Activated T-helper 2 cell treated with anti-CD3 and anti-CD28 coated beads, Interferon-gamma antibody, Interleukin-2, Interleukin-4, amounts not matched to agents 10 μg/mL and 5 μg/mL and 100 μg/mL, durations not matched to agents 14 hours and 24 hours and 36 hours (primary cell): ENCODE measurements at regions of chr1 and their contacts with region 1.

Region 1: GRCh38 chr1:185559684-185560331 is 174.4 kb upstream of the HMCN1 start:
- DNase-seq: peak; percentile 75
- H3K4me3 Mint-ChIP-seq: peak overlapping the region; percentile 5
- H3K27ac Mint-ChIP-seq: peak overlapping the region; percentile 71
- H3K4me1 Mint-ChIP-seq: peaks cover 51% of the 10 kb centered on the region
- H3K27me3 Mint-ChIP-seq: no peaks in the 10 kb centered on the region

Region 2: DNA sequence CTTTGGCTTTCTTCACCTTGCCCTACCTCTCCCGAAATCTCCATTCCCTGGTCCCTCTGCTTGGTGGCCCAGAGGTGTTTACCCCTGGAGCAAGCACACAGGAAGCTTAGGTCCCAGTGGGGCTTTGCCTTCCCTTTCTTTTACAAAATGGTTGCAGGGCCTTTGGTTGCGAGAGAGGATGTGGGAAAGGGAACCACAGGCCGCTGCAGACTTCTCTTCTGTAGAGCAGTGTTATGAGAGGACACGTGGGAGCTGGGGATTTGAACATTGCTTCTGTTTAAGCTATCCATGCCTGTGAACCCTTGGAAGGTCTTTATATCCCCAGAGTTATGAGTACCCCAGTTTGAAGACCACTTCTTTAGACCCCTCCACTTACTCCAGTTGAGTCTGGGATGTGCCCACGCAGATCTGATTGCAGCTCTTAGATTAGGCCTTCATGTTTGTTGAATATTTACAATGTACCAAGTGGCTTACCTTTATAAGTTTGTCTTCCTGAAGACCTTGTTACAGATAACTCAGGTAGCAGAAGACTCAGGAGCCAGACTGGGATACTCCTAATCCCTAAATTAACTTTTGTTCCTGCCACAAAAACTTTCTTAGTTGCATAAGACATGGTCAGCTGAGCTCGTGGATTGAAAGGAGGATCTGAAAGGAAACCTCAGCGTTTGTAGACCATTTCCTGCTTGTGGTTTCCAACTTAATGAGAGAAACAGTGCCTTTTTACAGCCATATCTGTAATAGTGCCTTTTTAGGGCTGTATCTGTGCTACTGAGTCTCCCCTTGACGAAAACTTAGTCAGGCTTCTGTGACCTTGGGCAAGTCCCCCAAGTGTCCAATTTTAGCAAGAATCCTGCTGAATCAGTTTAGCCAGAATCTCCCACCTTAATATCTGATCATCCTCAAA is 220.8 kb before region 1 on chr1:
- intact Hi-C with region 1: loop called (anchors 2 kb)
- DNase-seq: peak; percentile 47
- H3K4me3 Mint-ChIP-seq: peak overlapping the region; percentile 36
- H3K27ac Mint-ChIP-seq: peak overlapping the region; percentile 63
- H3K4me1 Mint-ChIP-seq: peaks cover 35% of the 10 kb centered on the region
- H3K27me3 Mint-ChIP-seq: no peaks in the 10 kb centered on the region

Region 3: GRCh38 chr1:185500001-185500626 is 59.7 kb before region 1 on chr1:
- intact Hi-C with region 1: loop called (anchors 2 kb)
- DNase-seq: no peak
- H3K4me3 Mint-ChIP-seq: no peak overlapping the region
- H3K27ac Mint-ChIP-seq: peak overlapping the region; percentile 48
- H3K4me1 Mint-ChIP-seq: peaks cover 30% of the 10 kb centered on the region
- H3K27me3 Mint-ChIP-seq: no peaks in the 10 kb centered on the region

Region 4: GRCh38 chr1:185534801-185535200 is 25.0 kb before region 1 on chr1:
- intact Hi-C with region 1: no loop called
- DNase-seq: no peak
- H3K4me3 Mint-ChIP-seq: no peak overlapping the region
- H3K27ac Mint-ChIP-seq: no peak overlapping the region
- H3K4me1 Mint-ChIP-seq: peaks cover 13% of the 10 kb centered on the region
- H3K27me3 Mint-ChIP-seq: no peaks in the 10 kb centered on the region

Region 5: DNA sequence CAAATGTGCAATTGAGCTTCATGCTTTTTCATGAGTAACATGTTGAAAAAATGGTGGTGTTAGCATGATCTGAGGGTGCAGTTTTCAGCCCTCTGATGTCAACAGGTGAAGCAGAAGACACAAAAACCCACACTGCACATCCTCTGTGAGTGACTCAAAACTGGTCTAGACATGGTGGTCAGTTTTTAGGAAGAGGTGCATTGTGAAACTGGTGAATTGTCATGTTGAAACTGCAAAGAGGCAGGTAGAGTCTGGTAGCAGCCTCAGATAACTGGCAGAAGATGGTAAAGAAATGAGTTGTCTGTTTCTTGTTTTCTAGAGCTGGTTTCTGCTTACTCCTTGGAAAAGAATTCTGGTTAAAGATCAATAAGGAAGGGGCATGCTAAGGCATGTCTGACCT is 77.0 kb after region 1 on chr1:
- intact Hi-C with region 1: loop called (anchors 1 kb)
- DNase-seq: peak; percentile 56
- H3K4me3 Mint-ChIP-seq: no peak overlapping the region
- H3K27ac Mint-ChIP-seq: peak overlapping the region; percentile 79
- H3K4me1 Mint-ChIP-seq: peaks cover 22% of the 10 kb centered on the region
- H3K27me3 Mint-ChIP-seq: no peaks in the 10 kb centered on the region

Region 6: GRCh38 chr1:186304982-186305949 is 745.5 kb after region 1 on chr1:
- intact Hi-C with region 1: loop called (anchors 10 kb)
- DNase-seq: no peak
- H3K4me3 Mint-ChIP-seq: no peak overlapping the region
- H3K27ac Mint-ChIP-seq: peak overlapping the region; percentile 59
- H3K4me1 Mint-ChIP-seq: peaks cover 45% of the 10 kb centered on the region
- H3K27me3 Mint-ChIP-seq: no peaks in the 10 kb centered on the region